Activated naive CD4-positive, alpha-beta T cell treated with anti-CD3 and anti-CD28 coated beads for 36 hours (primary cell): ENCODE measurements at regions of chr18 and their contacts with region 1.

Region 1: DNA sequence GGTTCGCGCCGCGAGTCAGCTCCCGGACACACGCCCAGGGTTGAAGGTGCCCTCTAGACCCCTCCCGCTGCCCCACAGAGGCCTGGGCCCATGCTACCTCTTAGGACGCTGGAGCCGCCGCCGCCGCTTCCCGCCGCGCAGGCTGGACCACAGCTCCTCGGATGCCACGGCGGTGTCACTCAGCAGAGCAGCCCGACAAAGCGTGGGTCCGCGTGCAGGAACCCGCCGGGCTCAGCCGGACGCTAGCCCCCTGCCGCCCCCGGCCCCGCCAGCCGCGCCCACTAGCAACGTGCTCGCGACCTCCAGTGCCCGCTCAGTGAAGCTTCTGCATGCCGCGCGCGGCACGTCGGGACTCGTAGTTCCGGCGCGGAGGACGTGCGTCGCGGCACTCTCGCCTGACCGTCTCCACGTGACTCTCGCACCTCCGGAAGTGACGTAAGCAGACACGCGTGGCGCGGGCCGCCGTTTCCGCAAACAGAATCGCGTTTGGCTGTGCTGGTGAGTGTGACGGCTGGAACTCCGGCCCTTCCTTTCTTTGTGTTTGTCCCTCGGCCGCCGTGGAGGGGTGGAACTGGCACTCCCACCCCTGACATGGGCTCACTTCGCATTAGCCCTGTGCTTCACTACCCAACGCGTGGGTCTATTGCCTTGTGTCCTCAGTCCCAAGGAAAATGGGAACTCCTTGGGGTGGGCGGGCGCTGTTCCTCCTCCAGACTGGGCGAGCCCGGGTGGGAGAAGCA is at the starts of genes FAM210A and RNMT:
- DNase-seq: peak; percentile 96
- H3K4me3 Mint-ChIP-seq: peak within 1 kb of the TSS; percentile 91
- H3K27ac Mint-ChIP-seq: peak within 1 kb of the TSS; percentile 89
- H3K4me1 Mint-ChIP-seq: peaks cover 46% of the 10 kb centered on the region
- H3K27me3 Mint-ChIP-seq: no peaks in the 10 kb centered on the region
- total RNA-seq, gene FAM210A: 18.6 to 20.2 TPM
- total RNA-seq, gene RNMT: 25.2 to 27.4 TPM

Region 2: DNA sequence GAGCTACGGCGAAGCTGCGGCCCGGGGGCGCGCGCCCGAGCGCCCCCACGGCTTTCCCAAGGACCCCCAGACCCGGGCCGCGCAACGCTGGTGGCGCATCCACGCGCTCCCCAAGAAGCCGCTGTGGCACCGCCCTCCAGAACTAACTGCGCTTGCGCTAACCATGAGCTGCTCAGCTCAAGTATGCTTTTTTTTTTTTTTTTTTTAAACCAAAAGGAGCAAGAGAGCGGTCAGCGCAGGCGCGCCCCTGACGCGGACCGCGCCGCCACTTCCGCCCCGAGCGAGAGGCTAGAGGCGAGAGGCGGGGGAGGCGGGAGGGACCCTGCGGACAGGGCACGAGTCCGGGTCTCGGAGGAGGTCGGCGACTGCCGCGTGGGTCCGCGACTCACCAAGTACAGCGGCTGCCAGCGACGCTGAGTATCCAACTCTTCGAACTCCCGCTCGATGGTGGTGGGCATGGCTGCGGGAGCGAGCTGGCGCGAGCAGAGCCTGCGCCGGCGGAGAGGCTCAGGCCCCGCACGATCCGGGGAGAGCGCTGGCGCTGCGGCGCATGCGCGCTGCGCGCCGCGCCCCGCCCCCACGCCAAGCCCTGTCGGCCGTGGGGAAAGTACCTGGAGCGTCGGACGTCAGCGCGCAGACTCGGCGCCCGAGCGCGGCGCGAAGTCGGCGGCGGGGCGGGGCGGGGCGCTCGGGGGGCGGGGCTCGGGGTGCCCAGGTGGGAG is 842.6 kb before region 1 on chr18 and contains the start of gene PTPN2:
- CTCF ChIA-PET with region 1: no interaction called
- intact Hi-C with region 1: loop called (anchors 10 kb)
- DNase-seq: peak; percentile 92
- H3K4me3 Mint-ChIP-seq: peak within 1 kb of the TSS; percentile 89
- H3K27ac Mint-ChIP-seq: peak within 1 kb of the TSS; percentile 90
- H3K4me1 Mint-ChIP-seq: peaks cover 53% of the 10 kb centered on the region
- H3K27me3 Mint-ChIP-seq: no peaks in the 10 kb centered on the region
- total RNA-seq, gene PTPN2: 68.5 to 71.8 TPM

Region 3: GRCh38 chr18:13268158-13269012 is 458.0 kb before region 1 on chr18:
- CTCF ChIA-PET with region 1: no interaction called
- intact Hi-C with region 1: loop called (anchors 5 kb)
- DNase-seq: no peak
- H3K4me3 Mint-ChIP-seq: no peak overlapping the region
- H3K27ac Mint-ChIP-seq: no peak overlapping the region
- H3K4me1 Mint-ChIP-seq: peaks cover 71% of the 10 kb centered on the region
- H3K27me3 Mint-ChIP-seq: no peaks in the 10 kb centered on the region

Region 4: DNA sequence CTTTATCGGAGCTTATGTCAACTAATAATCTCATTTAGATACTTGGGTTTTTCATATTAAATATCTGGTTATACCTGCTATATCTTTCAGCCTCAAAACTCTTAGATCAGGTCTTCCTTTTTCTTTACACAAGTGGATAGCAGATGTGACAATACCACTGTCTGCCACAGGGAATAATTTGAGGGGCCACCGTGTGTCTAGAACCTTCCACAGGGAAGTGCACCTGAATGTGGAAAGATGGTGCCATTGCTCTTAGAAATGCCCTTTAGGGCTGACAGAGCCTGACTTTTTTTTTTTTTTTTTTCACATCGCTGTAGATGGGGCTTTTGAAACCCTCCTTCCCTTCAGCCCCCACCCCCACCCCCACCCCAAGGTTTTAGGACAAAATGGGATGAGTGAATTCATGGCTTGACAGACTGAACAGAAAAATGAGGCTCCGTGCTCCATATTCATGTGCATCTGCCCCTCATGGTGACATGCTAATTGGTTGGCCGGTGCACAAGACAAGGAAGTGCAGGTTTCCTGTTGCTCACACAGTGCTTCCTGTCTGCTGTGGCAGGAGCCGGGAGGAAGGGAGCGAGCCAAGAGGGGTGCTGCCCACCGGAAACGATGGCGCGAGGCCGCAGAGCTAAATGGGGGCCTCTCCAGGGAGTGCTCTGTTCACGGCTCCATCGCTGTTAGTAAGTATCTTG is 261.8 kb before region 1 on chr18:
- CTCF ChIA-PET with region 1: interaction called, 3 read pairs
- intact Hi-C with region 1: loop called (anchors 10 kb)
- DNase-seq: peak; percentile 86
- H3K4me3 Mint-ChIP-seq: peak overlapping the region; percentile 82
- H3K27ac Mint-ChIP-seq: peak overlapping the region; percentile 95
- H3K4me1 Mint-ChIP-seq: peaks cover 56% of the 10 kb centered on the region
- H3K27me3 Mint-ChIP-seq: no peaks in the 10 kb centered on the region

Region 5: GRCh38 chr18:13530033-13530878 is 196.1 kb before region 1 on chr18:
- CTCF ChIA-PET with region 1: no interaction called
- intact Hi-C with region 1: no loop called
- DNase-seq: no peak
- H3K4me3 Mint-ChIP-seq: no peak overlapping the region
- H3K27ac Mint-ChIP-seq: no peak overlapping the region
- H3K4me1 Mint-ChIP-seq: peaks cover 26% of the 10 kb centered on the region
- H3K27me3 Mint-ChIP-seq: no peaks in the 10 kb centered on the region

Region 6: DNA sequence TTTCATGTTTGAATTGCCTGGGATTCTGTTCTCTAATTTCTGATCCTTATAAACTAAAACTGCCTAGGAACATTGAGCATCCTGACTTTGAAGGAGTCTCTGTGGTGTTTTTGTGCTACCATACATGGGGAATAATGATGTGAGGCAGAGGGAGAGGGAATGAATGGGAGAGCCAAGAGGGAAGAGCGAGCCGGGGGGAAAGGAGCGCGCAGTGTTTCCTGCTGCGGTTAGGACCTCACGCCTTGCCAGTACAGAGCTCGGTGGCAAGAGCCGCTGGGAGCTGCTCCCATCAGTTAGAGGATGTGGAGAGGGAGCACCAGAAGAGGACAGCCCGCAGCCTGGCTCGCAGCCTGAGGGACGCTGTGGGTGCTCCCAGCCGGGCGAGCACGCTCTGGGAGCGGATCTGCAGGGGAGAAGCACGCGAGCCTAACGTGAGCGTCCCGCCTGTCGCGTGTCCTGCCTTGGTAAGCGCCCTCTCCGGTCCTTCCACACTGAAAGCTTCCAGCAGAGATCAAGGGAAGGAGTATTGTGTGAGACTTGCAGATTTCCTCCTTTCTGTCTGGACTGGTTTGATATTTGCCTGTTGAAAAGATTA is 114.7 kb before region 1 on chr18:
- CTCF ChIA-PET with region 1: interaction called, 3 read pairs
- intact Hi-C with region 1: loop called (anchors 2 kb)
- DNase-seq: peak; percentile 26
- H3K4me3 Mint-ChIP-seq: peak overlapping the region; percentile 71
- H3K27ac Mint-ChIP-seq: no peak overlapping the region
- H3K4me1 Mint-ChIP-seq: peaks cover 74% of the 10 kb centered on the region
- H3K27me3 Mint-ChIP-seq: no peaks in the 10 kb centered on the region

Region 7: GRCh38 chr18:13672657-13673056 is 53.7 kb before region 1 on chr18:
- CTCF ChIA-PET with region 1: no interaction called
- intact Hi-C with region 1: loop called (anchors 10 kb)
- DNase-seq: no peak
- H3K4me3 Mint-ChIP-seq: no peak overlapping the region
- H3K27ac Mint-ChIP-seq: no peak overlapping the region
- H3K4me1 Mint-ChIP-seq: no peaks in the 10 kb centered on the region
- H3K27me3 Mint-ChIP-seq: no peaks in the 10 kb centered on the region